ENCODE measurements at regions of chr9 and their contacts with region 1.

Region 1: DNA sequence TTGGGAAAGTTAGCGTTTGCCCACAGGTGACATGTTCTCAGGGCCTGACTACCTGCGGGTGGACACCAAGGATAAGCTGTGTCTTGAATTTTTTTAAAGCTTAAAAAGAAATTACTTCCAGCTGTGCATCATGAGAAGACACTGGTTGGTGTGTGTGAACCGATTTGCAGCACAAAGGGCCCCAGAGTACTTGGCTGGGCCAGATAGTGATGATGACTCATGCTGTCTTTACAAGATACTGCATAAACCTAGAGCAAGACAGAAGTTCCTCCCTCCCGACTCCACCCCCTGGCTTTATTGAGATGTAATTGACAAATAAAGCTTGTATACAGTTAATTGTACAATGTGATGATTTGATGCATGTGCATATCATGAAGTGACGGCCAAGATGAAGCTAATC is 212.8 kb downstream of the NXNL2 start:
- DNase-seq: peak; percentile 33
- H3K4me3 ChIP-seq: no peak overlapping the region
- H3K27ac ChIP-seq: peak overlapping the region; percentile 49
- H3K4me1 ChIP-seq: no peaks in the 10 kb centered on the region
- H3K27me3 ChIP-seq: no peaks in the 10 kb centered on the region
- CTCF ChIP-seq: no peak

Region 2: DNA sequence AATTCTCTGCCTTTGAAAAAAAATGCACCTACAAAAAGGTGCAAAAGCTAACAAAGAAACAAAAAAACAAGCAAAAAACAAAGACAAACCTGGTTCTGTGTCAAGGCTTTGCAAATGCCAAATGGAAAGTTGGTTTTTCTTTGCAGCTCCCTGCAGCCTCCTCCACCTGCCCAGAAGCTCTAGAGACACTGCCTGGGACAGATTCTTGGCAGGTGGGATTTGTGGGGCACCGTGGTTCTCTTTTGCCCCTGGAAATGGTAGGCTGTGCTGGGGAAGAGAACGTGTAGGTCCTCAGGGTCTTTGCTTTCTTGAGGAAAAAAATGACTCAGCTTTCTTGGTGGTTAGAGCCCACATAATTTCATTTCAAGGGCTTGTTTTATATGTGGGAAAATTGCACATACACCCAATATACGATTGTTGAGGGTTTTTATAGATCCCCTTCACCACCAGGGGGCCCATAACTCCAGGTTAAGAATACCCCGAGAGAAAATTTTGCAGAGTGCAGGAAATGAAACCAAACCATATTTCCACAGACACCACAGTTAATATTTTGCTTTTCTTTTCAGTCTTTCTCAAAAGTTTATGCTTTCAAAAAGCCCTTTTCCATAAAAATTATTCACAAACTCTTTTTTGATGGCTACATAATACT is 154.1 kb before region 1 on chr9:
- intact Hi-C with region 1: no loop called
- DNase-seq: peak; percentile 59
- H3K4me3 ChIP-seq: no peak overlapping the region
- H3K27ac ChIP-seq: no peak overlapping the region
- H3K4me1 ChIP-seq: no peaks in the 10 kb centered on the region
- H3K27me3 ChIP-seq: no peaks in the 10 kb centered on the region
- CTCF ChIP-seq: peak; percentile 51

Region 3: DNA sequence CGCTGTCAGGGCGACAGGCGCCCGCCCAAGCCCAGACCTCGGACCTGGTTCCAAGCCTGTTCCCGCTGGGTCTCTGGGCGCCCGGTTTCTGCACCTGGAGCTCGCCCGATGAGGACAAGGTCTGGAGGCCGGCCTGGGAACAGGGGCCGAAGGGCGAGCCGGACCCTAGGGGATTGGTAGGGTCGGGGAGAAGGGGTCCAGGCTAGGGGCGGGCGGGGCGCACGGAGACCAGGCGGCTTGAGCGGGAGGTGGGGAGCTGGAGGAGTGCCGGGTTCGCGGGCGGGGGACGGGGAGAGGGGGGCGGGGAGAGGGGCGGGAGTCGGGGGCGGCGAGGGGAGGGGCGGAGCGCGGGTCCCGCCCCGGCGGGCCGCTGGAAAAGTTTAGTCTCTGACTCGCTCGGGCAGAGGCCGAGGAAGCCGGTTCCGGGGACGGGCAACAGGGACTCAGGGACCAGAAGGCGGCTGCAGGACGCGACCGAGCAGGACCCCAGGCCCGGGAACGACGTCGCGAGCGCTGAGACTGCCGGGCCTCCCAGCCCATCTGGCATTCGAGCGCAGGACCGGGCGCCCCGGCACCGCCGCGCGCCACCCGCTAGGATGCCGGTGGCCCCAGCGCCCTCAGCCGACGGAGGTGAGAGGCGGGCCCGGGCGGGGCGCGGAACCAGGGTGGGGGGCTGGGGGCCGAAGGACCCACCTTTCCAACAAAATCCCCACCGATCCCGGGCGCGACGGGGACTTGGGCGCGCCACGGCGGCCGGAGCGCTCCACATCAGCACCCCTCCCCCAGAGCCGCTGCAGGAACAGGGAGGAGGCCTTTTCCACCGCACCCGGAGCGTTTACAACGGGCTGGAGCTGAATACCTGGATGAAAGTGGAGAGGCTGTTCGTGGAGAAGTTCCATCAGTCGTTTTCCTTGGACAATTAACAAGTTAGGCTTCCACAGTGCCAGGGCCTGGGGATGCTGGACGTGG is 243.6 kb after region 1 on chr9 and contains the start of gene S1PR3:
- intact Hi-C with region 1: loop called (anchors 10 kb)
- DNase-seq: no peak
- H3K4me3 ChIP-seq: peak within 1 kb of the TSS; percentile 46
- H3K27ac ChIP-seq: no peak within 1 kb of the TSS
- H3K4me1 ChIP-seq: no peaks in the 10 kb centered on the region
- H3K27me3 ChIP-seq: peaks cover 15% of the 10 kb centered on the region
- CTCF ChIP-seq: no peak
- total RNA-seq, gene S1PR3: 0.67 to 3.2 TPM